Activated naive CD8-positive, alpha-beta T cell treated with anti-CD3 and anti-CD28 coated beads, Interleukin-2, amount 10 ng/mL, durations not matched to agents 7 days and 5 days (primary cell): ENCODE measurements at regions of chr9 and their contacts with region 1.

Region 1: DNA sequence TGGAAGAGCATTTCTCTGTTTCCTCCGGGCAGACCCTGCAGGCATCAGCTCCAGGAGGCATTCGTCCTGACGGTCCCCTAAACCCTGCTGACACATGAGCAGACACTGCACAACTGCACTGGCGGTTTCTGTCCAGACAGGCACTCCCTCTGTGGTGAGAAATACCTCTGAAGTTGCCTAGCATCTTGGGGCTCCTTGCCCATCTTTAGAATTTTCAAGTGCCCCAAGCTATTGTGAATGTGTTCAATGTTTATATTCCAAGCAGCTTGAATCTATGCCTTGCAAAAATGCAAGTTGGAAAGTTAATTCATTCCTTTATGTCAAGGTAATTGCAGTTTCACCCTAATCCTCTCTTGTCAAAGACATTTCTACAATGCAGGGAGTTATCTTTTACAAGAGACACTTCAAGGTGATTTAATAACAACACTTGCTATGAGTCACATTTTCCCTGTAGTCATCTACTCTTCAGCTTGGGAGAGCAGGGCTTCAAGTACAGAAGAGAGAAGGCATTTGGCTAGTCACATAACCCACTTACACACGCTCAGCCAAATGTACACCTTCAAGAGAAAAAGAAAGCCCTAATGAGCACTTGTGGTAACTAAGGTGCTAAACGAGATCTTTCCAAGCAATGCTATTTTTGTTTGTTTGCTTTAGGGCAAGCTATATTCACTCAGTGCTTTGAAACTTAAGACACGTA is 302.5 kb downstream of the MLLT3 start:
- DNase-seq: no peak
- ATAC-seq: peak; percentile 43
- H3K4me3 Mint-ChIP-seq: peak overlapping the region; percentile 11
- H3K27ac Mint-ChIP-seq: peak overlapping the region; percentile 89
- H3K4me1 Mint-ChIP-seq: peaks cover 81% of the 10 kb centered on the region
- H3K27me3 Mint-ChIP-seq: no peaks in the 10 kb centered on the region

Region 2: GRCh38 chr9:20333991-20334390 is 14.2 kb after region 1 on chr9:
- POLR2A ChIA-PET with region 1: interaction called, 10 read pairs
- DNase-seq: no peak
- ATAC-seq: no peak
- H3K4me3 Mint-ChIP-seq: no peak overlapping the region
- H3K27ac Mint-ChIP-seq: no peak overlapping the region
- H3K4me1 Mint-ChIP-seq: peaks cover 58% of the 10 kb centered on the region
- H3K27me3 Mint-ChIP-seq: no peaks in the 10 kb centered on the region